Breast epithelium (tissue), 4 donors: ENCODE measurements at regions of chr5 and their contacts with region 1.

Region 1: GRCh38 chr5:81254886-81255557 is 21.9 kb downstream of the CKMT2 start:
- DNase-seq: no peak
- H3K4me3 ChIP-seq: no peak overlapping the region
- H3K27ac ChIP-seq: no peak overlapping the region
- H3K4me1 ChIP-seq: no peaks in the 10 kb centered on the region
- H3K27me3 ChIP-seq: no peaks in the 10 kb centered on the region
- CTCF ChIP-seq: no peak
- POLR2A ChIP-seq: no peak

Region 2: GRCh38 chr5:81336556-81336955 is 81.5 kb after region 1 on chr5:
- intact Hi-C with region 1: loop called (anchors 2 kb)
- DNase-seq: no peak
- H3K4me3 ChIP-seq: no peak overlapping the region
- H3K27ac ChIP-seq: no peak overlapping the region
- H3K4me1 ChIP-seq: no peaks in the 10 kb centered on the region
- H3K27me3 ChIP-seq: no peaks in the 10 kb centered on the region
- CTCF ChIP-seq: no peak
- POLR2A ChIP-seq: no peak

Region 3: DNA sequence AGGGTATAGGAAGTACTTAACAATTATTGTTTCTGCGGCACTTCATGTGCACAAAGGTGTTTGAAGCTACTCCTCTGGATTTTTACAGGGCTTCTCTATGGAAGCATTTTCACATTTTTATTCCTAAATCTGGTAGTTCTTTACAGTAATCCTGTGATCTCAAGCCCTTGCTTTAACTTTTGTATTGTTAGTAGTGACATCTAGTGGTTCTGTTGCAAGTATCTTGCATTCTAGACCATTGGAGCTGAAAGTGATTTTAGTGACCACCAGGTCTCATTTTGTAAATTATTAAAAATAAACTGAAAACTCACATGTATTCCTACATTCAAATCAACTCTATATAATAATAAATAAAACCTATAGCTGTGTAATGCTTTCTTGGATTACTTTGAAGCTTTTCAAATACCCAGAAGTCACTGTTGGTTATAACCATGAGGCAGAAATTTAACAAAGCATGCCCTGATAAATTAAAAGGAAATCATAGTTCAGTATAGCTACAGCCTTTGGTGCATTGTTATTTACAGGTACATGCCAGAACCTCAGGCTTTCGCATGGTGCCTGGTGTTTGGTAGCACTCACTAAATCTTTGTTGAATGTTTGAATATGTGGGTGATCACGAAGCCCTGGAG is 1004.3 kb after region 1 on chr5:
- intact Hi-C with region 1: no loop called
- DNase-seq: no peak
- H3K4me3 ChIP-seq: no peak overlapping the region
- H3K27ac ChIP-seq: no peak overlapping the region
- H3K4me1 ChIP-seq: no peaks in the 10 kb centered on the region
- H3K27me3 ChIP-seq: no peaks in the 10 kb centered on the region
- CTCF ChIP-seq: peak in 1 of 3 donors; percentile 12
- POLR2A ChIP-seq: no peak